Ascending aorta (tissue), 2 donors: ENCODE measurements at regions of chr16 and their contacts with region 1.

Region 1: DNA sequence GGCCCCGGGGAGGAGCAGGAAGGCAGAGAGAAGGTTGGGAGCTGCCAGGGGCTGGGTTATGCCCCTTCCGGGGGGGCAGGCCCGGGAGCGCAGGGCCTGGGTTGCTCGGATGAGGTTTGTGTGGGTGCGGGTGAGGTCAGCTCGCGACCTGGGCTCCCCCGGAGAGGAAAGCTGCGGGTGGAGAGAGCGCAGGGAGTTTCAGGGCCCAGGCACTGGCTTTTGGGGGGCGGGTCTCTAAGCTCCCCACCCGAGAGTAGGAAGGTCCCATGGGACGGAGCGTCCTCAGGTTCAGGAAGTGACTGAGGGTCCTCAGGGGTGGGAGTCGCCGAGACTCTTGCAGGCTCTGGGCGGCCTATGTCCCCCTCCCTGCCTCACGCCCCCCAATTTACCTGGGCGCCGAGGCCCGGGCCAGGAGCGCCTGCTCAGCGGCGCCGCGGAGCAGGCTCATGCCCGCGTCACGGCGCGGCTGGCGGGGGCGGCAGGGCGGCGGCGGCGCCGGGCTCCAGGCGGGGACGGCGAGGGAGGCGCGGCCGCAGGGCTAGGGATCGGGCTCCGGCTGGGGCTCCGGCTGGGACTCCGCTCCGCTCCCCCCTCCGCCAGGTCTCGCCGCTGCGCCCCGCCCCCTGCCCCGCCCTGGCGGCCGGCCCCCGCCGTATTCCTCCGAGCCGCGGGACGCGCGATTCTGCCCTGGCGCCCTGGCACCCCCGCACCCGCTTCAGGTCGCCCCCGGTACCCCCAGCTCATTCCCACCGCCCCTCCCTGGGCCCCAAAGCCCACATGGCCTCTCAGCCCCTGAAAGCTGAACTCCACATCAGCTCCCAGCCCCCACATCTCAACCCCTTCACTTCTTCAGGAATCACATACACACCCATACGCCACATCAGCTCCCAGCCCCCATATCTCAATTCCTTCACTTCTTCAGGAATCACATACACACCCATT is at the start of gene DOK4:
- DNase-seq: peak in 1 of 2 donors; percentile 88
- H3K4me3 ChIP-seq: peak within 1 kb of the TSS; percentile 84 to 93
- H3K27ac ChIP-seq: peak within 1 kb of the TSS; percentile 91 to 94
- H3K4me1 ChIP-seq: peaks cover 7 to 32% of the 10 kb centered on the region in 2 donors
- H3K27me3 ChIP-seq: no peaks in the 10 kb centered on the region
- CTCF ChIP-seq: no peak
- total RNA-seq, gene DOK4: 40.2 TPM

Region 2: GRCh38 chr16:57535680-57536305 is 49.6 kb after region 1 on chr16:
- intact Hi-C with region 1: loop called (anchors 1 kb)
- DNase-seq: peak; percentile 74 to 97
- H3K4me3 ChIP-seq: peak overlapping the region; percentile 92 to 93
- H3K27ac ChIP-seq: peak overlapping the region; percentile 89 to 90
- H3K4me1 ChIP-seq: peaks cover 19 to 24% of the 10 kb centered on the region in 2 donors
- H3K27me3 ChIP-seq: no peaks in the 10 kb centered on the region
- CTCF ChIP-seq: peak in 2 of 3 experiments; percentile 21 to 27